Activated CD4-positive, alpha-beta memory T cell treated with anti-CD3 and anti-CD28 coated beads for 36 hours (primary cell): ENCODE measurements at regions of chr7 and their contacts with region 1.

Region 1: DNA sequence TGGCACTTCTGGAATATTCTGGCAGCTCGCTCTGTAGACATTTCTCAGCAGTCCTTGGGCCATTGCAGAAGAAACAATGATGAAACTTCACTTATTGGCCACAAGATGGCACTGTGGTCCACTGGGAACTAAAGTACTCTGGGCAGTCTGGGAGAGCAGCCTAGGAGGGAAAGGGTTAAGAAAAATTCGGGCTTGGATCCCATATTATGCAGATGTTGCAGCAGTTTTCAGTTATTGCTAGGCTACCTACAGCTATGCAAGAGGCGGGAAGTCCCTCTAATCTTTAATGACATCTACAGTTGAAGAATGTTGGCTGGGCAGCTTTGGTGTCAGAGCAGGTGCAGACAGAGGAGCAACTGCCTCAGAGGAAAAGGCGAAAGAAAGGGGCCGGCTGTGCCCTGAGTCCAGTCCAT is 201.7 kb upstream of the PRSS58 start:
- DNase-seq: peak; percentile 49
- H3K4me3 Mint-ChIP-seq: no peak overlapping the region
- H3K27ac Mint-ChIP-seq: peak overlapping the region; percentile 39
- H3K4me1 Mint-ChIP-seq: peaks cover 59% of the 10 kb centered on the region
- H3K27me3 Mint-ChIP-seq: no peaks in the 10 kb centered on the region

Region 2: DNA sequence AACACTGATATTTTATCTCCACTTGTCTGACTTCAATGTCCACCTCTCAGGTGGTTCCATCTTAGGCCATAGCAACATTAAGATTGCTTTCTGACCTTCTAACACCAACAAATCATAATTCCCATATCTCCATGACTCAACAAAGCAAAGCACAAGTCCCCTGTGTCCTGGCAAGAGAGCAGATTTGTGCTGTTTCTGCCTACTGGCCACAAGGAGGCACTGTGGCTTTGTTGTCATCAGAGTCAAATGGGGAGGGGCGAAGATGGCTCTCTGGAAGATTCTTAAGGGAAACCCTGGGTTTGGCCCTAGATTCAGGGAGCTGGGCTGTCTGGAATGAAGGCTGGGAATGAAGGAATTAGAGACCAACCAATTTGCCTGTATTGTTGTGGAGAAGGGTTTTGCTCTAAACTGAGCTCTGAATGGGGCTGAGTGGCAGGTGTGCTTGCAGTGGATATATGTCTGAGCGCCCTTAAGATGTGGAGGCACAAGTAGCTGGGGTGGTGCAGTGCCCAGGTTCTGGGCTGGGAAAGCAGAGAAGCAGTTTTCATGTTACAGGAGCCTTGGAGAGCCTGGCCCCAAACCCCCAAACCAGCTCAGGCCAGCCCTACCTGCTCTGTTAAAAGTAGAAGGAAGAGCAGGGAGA is 46.9 kb before region 1 on chr7:
- CTCF ChIA-PET with region 1: interaction called, 11 read pairs
- POLR2A ChIA-PET with region 1: no interaction called
- intact Hi-C with region 1: no loop called
- DNase-seq: peak; percentile 51
- H3K4me3 Mint-ChIP-seq: no peak overlapping the region
- H3K27ac Mint-ChIP-seq: no peak overlapping the region
- H3K4me1 Mint-ChIP-seq: no peaks in the 10 kb centered on the region
- H3K27me3 Mint-ChIP-seq: no peaks in the 10 kb centered on the region

Region 3: DNA sequence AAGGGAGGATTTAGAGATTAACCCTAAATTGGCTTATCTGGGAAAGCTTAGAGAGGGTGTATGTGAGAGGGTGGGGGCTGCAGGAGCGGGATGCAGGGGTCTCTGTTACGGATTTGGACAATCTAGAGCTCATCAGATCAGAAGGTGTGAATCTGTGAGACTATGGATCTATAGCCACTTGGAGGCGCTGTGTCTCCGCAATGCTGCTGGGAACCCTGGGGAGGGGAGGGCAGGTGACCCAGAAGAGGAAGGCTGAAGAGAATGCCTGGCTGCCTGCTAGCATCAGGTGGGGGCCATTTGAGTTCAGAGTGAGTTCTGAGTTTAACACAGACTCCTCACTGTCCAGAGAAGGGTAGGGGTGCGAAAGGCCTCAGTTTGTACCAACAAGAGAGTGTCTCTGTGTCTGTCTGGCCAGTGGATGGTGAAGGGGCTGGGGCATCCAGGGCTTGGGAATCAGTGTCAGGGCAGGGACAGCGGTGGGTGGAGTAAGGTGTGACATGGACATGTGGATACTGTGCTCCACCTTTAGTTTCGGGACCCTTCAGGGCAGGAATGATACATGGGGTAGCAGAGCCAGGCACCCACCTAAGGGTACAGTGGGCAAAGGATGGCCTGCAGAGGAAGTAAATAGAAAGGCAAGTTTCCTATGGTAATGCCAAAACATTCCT is 14.4 kb before region 1 on chr7:
- CTCF ChIA-PET with region 1: interaction called, 12 read pairs
- POLR2A ChIA-PET with region 1: no interaction called
- intact Hi-C with region 1: loop called (anchors 2 kb)
- DNase-seq: peak; percentile 53
- H3K4me3 Mint-ChIP-seq: no peak overlapping the region
- H3K27ac Mint-ChIP-seq: peak overlapping the region; percentile 26
- H3K4me1 Mint-ChIP-seq: peaks cover 31% of the 10 kb centered on the region
- H3K27me3 Mint-ChIP-seq: peaks cover 2% of the 10 kb centered on the region

Region 4: DNA sequence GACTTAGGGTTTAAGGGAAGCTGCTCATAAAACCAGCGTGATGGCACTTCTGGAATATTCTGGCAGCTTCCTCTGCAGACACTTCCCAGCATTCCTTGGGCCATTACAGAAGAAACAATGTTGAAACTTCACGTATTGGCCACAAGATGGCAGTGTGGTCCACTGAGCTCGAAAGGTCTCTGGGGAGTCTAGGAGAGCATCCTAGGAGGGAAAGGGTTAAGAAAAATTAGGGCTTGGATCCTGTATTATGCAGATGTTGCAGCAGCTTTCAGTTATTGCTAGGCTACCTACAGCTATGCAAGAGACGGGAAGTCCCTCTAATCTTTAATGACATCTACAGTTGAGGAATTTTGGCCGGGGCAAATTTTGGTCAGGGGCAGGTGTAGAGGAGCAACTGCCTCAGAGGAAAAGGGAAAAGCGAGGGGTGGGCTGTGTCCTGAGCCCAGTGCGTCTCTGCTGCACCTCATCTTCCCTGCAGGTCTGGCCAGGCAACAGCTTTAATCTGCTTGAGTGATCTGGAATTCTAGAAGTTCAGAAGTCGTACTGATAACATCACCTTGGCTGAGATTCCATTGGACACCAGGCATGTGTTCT is 19.0 kb after region 1 on chr7:
- CTCF ChIA-PET with region 1: interaction called, 324 read pairs
- POLR2A ChIA-PET with region 1: no interaction called
- intact Hi-C with region 1: loop called (anchors 1 kb)
- DNase-seq: peak; percentile 48
- H3K4me3 Mint-ChIP-seq: no peak overlapping the region
- H3K27ac Mint-ChIP-seq: peak overlapping the region; percentile 49
- H3K4me1 Mint-ChIP-seq: peaks cover 76% of the 10 kb centered on the region
- H3K27me3 Mint-ChIP-seq: no peaks in the 10 kb centered on the region

Region 5: GRCh38 chr7:142516038-142516501 is 56.5 kb after region 1 on chr7:
- CTCF ChIA-PET with region 1: interaction called, 22 read pairs
- POLR2A ChIA-PET with region 1: no interaction called
- intact Hi-C with region 1: loop called (anchors 5 kb)
- DNase-seq: peak; percentile 53
- H3K4me3 Mint-ChIP-seq: no peak overlapping the region
- H3K27ac Mint-ChIP-seq: no peak overlapping the region
- H3K4me1 Mint-ChIP-seq: peaks cover 41% of the 10 kb centered on the region
- H3K27me3 Mint-ChIP-seq: no peaks in the 10 kb centered on the region